GM10248 (cell line): ENCODE measurements at regions of chr1 and their contacts with region 1.

Region 1: GRCh38 chr1:12052008-12052573 is 11.0 kb upstream of the TNFRSF8 start:
- DNase-seq: peak; percentile 86
- CTCF ChIP-seq: no peak

Region 2: DNA sequence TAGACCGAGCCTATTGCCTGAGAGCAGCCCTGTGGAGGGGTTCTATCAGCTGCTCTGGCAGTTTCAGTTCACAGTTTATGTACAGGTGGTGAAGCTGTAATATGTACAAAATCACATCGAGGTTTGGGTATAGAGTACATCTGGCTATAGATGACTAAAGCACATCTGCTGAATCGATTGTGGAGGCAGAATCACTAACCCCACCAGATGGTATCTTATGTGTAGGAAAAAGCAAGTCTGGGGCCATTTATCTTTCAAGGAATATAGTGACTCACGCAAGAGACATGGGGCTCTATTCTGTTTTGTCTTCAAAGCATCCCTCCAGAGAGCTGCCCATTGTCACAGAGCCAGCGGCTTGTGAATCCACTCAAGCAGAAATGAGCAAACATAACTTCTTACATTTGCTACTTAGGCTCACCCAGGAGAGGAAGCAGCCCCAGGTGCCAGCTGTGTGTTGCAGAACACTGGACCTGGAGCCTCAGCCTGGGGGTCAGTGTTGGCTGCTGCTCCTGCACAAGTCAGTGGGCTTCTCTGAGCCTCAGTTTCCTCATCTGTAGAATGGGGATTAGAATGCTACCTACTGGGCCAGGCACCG is 11.5 kb before region 1 on chr1:
- CTCF ChIA-PET with region 1: interaction called, 11 read pairs
- POLR2A ChIA-PET with region 1: interaction called, 8 read pairs
- DNase-seq: peak; percentile 62
- CTCF ChIP-seq: no peak

Region 3: GRCh38 chr1:12067900-12068821 is 16.1 kb after region 1 on chr1:
- CTCF ChIA-PET with region 1: interaction called, 10 read pairs
- POLR2A ChIA-PET with region 1: interaction called, 9 read pairs
- DNase-seq: peak; percentile 68
- CTCF ChIP-seq: no peak